ENCODE measurements at regions of chr21 and their contacts with region 1.

Region 1: DNA sequence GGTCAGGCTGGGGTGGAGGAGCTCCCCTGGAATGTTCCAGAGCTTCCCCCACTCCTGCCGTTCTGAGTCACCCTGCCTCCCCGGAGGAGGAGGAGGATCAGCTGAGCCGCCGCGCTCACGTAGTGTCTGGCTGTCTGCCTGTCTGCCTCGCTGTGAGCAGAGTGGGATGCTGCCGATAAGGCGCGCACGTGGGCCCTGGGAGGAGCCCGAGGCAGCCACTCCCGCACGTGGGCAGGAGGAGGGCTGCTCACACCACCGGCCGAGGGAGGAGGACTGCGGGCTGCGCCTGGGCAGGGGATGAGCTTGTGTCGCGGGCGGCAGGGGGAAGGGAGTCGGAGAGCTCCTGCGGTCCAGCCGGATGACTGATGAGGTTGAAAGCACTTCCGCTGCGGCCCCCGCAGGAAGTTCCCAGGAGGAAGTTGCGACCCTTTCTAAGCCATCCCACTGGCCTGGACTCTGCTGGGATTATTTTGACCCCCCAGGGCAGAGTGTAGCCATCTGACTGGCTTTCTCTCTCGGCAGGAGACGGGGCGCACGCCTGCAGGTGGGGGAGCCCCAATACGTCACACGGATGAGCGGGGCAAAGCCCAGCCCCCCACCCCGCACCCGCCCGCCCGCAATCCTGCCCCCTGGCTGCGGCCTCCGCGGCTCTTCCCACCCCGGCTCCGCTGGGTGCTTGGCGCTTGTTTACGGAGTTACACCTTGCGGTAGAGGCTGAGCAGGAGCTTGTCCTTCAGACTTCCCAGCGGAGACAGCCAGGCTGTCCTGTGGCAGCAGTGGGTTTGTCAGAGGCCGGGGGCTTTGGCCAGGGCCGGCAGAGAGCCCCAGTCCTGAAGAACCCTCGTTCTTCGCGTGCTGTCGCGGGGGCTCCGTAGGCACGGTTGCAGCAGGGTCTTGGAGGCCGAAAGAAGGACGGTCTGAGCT is 9.8 kb downstream of the PDXK start:
- H3K4me3 Mint-ChIP-seq: peak overlapping the region; percentile 77
- H3K27ac Mint-ChIP-seq: peak overlapping the region; percentile 84
- H3K4me1 Mint-ChIP-seq: peaks cover 91% of the 10 kb centered on the region
- H3K27me3 Mint-ChIP-seq: no peaks in the 10 kb centered on the region

Region 2: GRCh38 chr21:43667191-43667904 is 61.4 kb before region 1 on chr21:
- intact Hi-C with region 1: loop called (anchors 10 kb)
- H3K4me3 Mint-ChIP-seq: no peak overlapping the region
- H3K27ac Mint-ChIP-seq: peak overlapping the region; percentile 5
- H3K4me1 Mint-ChIP-seq: peaks cover 30% of the 10 kb centered on the region
- H3K27me3 Mint-ChIP-seq: no peaks in the 10 kb centered on the region

Region 3: DNA sequence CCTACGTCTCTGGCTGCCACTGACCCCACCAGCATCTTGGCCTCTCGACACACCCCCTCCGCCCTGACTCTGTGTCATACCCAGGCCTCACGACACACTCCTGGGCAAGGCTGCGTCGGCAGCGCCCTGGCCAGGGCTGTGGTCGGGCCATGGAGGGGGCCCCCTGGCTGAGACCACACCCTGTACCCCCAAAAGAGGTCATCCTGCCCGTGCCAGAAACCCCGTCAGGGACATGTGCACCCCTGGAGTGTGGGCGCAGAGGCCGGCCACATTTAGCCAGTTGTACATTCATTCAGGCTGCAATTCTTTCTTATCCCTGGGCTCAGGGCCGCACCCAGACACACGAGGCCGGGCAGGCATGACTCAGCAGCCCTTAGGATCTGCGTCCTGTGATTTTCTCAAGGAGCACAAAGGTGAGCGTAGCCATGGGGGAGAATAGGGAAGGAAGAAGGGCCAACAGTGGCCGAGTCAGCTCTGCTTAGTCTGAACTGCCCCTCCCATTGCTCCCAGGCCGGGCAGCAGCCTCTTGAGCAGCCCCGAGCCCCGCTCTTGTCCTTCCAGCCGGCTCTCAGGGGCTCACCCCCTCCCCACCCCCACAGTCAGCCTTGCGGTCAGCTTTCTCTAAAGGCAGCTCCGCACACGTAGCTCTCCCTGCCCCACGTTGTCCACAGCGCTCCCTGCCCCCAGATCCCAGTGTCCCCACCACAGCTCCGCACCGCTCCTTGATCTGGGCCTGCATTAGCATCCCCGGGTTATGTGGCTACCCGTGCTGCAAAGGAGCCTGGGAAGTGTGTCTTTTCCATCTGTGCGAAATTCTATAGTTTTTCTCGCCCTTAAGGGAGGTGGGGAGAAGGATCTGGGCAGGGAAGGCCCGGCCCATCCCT is 39.5 kb after region 1 on chr21:
- intact Hi-C with region 1: loop called (anchors 5 kb)
- H3K4me3 Mint-ChIP-seq: peak overlapping the region; percentile 30
- H3K27ac Mint-ChIP-seq: peak overlapping the region; percentile 87
- H3K4me1 Mint-ChIP-seq: peaks cover 58% of the 10 kb centered on the region
- H3K27me3 Mint-ChIP-seq: no peaks in the 10 kb centered on the region

Region 4: GRCh38 chr21:43789276-43790009 is 60.7 kb after region 1 on chr21 and contains the start of gene RRP1:
- intact Hi-C with region 1: no loop called
- H3K4me3 Mint-ChIP-seq: peak within 1 kb of the TSS; percentile 96
- H3K27ac Mint-ChIP-seq: peak within 1 kb of the TSS; percentile 96
- H3K4me1 Mint-ChIP-seq: peaks cover 39% of the 10 kb centered on the region
- H3K27me3 Mint-ChIP-seq: peaks cover 5% of the 10 kb centered on the region

Region 5: DNA sequence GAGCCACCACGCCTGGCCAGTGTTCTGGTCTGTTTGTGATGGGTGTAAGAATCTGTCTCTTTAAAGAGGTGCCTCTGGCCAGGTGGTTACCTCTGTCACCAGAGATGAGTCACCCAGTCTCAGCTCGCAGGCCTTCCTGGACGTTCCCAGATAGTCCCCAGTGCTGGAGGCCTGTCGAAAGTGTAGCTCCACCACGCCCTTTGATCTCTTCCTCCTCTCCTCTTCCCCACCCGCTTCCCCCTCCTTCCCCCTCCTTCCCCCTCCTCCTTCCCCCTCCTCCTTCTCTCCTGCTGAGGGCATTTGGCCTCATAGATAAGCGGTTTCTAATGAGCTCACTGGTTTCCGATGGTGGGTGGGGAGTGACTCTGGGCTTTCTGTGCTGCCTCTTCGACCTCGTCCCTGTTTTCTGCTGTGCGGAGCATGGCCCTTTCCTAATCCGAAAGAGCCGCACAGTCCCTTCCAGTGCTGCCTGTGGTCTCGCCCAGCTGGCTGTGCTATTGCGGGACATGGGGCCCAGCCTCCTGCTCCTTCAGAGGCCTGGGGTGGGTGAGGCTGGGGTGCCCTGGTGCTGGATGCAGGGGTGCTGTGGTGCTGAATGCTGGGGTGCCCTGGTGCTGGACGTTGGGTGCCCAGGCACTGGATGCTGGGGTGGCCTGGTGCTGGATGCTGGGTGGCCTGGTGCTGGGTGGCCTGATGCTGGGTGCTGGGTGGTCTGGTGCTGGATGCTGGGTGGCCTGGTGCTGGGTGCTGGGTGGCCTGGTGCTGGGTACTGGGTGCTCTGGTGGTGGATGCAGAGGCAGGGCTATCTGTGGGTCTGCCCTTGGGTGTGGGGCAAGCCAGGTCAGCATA is 155.5 kb after region 1 on chr21:
- intact Hi-C with region 1: no loop called
- H3K4me3 Mint-ChIP-seq: peak overlapping the region; percentile 47
- H3K27ac Mint-ChIP-seq: peak overlapping the region; percentile 11
- H3K4me1 Mint-ChIP-seq: peaks cover 61% of the 10 kb centered on the region
- H3K27me3 Mint-ChIP-seq: no peaks in the 10 kb centered on the region

Region 6: DNA sequence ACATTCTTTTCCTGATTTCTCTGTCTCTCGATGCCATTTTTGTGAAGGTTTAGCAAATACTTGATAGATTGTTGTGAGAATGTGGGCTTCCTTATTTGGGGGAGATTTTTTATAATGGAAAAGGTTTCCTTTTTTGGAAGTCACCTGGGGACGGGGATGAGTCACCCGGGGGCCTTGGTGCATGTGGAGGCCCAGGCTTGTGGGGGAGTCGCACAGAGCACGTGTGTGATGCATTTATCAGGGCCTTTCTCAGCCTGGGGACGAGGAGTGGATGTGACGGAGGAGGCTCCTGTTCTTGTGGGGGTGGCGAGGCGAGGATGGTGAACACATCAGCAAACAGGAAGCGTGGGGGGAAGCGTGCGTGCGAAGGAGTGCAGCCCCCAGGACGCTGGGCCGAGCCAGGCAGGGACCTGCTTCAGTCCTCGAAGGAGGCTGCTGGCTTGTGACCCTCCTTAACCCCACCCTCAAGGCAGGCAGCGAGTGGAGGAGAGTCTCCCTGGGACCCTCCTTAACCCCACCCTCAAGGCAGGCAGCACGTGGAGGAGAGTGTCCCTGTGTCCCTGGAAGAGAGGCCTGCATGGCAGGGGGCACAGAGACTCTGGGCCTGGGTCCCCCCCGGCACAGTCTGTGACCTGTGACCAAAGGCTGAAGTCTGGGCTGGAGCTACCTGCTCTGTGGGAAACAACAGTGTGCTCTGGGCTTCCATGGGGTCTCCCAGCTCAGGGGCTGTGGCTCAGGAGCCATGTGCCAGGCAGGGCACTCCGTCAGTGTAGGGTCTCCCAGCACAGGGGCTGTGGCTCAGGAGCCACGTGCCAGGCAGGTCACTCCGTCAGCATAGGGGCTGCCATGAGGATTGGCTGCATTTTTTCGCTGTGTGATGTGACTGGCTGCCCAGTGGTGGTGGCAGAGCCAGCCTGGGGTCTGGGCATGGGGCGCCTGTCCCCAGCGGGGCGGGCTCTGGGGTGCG is 193.5 kb after region 1 on chr21:
- intact Hi-C with region 1: no loop called
- H3K4me3 Mint-ChIP-seq: no peak overlapping the region
- H3K27ac Mint-ChIP-seq: peak overlapping the region; percentile 6
- H3K4me1 Mint-ChIP-seq: peaks cover 51% of the 10 kb centered on the region
- H3K27me3 Mint-ChIP-seq: no peaks in the 10 kb centered on the region